ENCODE measurements at regions of chr9 and their contacts with region 1.

Region 1: GRCh38 chr9:86034863-86035734 is 64.3 kb downstream of the GOLM1 start:
- DNase-seq: peak; percentile 69
- H3K4me3 Mint-ChIP-seq: no peak overlapping the region
- H3K27ac Mint-ChIP-seq: no peak overlapping the region
- H3K4me1 Mint-ChIP-seq: no peaks in the 10 kb centered on the region
- H3K27me3 Mint-ChIP-seq: no peaks in the 10 kb centered on the region
- CTCF ChIP-seq: peak; percentile 53

Region 2: GRCh38 chr9:85971731-85972130 is 63.4 kb before region 1 on chr9:
- CTCF ChIA-PET with region 1: no interaction called
- intact Hi-C with region 1: no loop called
- DNase-seq: no peak
- H3K4me3 Mint-ChIP-seq: no peak overlapping the region
- H3K27ac Mint-ChIP-seq: no peak overlapping the region
- H3K4me1 Mint-ChIP-seq: no peaks in the 10 kb centered on the region
- H3K27me3 Mint-ChIP-seq: no peaks in the 10 kb centered on the region
- CTCF ChIP-seq: no peak

Region 3: DNA sequence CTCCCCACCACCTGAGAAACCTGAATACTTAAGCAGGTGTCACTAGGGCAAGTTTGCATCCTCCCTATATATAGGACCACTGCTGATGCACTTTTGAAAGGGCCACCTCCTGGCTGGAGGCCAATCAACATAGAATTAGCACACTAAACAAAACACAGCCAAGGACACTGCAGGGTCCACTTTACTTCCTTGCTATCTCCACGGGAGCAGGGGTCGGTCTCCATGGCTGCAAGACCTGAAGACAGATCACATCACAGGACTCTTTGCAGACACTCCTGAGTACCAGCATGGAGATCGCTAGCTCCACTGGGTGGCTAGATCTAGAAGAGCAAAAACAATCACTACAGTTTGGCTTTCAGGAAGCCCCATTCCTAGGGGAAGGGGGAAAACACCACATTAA is 152.0 kb after region 1 on chr9:
- CTCF ChIA-PET with region 1: no interaction called
- intact Hi-C with region 1: loop called (anchors 1 kb)
- DNase-seq: no peak
- H3K4me3 Mint-ChIP-seq: no peak overlapping the region
- H3K27ac Mint-ChIP-seq: no peak overlapping the region
- H3K4me1 Mint-ChIP-seq: no peaks in the 10 kb centered on the region
- H3K27me3 Mint-ChIP-seq: no peaks in the 10 kb centered on the region
- CTCF ChIP-seq: no peak

Region 4: DNA sequence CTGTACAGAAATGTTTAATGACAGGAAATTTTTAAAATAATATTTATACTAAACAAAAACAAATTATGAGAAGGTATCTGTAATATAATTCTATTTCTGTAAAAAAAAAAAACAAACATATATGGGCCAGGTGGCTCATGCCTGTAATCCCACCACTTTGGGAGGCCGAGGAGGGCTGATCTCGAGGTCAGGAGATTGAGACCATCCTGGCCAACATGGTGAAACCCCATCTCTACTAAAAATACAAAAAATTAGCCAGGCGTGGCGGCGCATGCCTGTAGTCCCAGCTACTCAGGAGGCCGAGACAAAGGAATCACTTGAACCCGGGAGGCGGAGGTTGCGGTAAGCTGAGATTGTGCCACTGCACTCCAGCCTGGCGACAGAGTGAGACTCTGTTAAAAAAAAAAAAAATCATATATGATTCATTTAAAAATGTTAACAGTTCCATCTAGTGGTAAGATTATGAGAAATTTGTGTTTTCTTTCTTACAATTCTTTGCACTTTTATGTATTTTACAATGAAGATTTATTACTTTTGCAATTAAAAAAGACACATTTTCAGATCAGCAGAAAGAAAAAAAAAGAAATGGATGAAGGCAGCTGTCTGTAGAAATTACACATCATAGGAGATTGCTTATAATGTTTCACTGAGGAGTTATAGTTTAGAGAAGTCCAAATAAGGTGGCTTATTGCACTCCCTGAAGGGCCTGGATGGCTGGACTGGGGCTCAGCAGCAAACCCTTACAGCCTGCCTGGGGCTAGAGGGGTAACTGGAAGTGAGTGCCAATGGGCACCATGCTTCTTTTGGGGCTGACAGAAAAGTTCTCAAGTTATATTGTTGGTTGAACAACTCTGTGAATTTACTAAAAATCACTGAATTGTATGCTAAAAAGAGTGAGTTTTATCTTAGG is 204.0 kb after region 1 on chr9:
- CTCF ChIA-PET with region 1: no interaction called
- intact Hi-C with region 1: loop called (anchors 10 kb)
- DNase-seq: no peak
- H3K4me3 Mint-ChIP-seq: no peak overlapping the region
- H3K27ac Mint-ChIP-seq: no peak overlapping the region
- H3K4me1 Mint-ChIP-seq: peaks cover 7% of the 10 kb centered on the region
- H3K27me3 Mint-ChIP-seq: no peaks in the 10 kb centered on the region
- CTCF ChIP-seq: no peak